ENCODE measurements at regions of chr7 and their contacts with region 1.

Region 1: GRCh38 chr7:76179686-76180085 is 22.0 kb upstream of the SRRM3 start:
- DNase-seq: no peak
- ATAC-seq: no peak
- H3K4me3 ChIP-seq: no peak overlapping the region
- H3K27ac ChIP-seq: no peak overlapping the region
- H3K4me1 ChIP-seq: peaks cover 0 to 7% of the 10 kb centered on the region in 2 donors
- H3K27me3 ChIP-seq: no peaks in the 10 kb centered on the region
- CTCF ChIP-seq: no peak

Region 2: GRCh38 chr7:75993689-75994387 is 185.8 kb before region 1 on chr7:
- intact Hi-C with region 1: no loop called
- DNase-seq: peak in 2 of 4 donors; percentile 59 to 90
- ATAC-seq: peak; percentile 50
- H3K4me3 ChIP-seq: peak overlapping the region; percentile 89 to 99
- H3K27ac ChIP-seq: peak overlapping the region; percentile 85 to 88
- H3K4me1 ChIP-seq: peaks cover 10 to 57% of the 10 kb centered on the region in 2 donors
- H3K27me3 ChIP-seq: no peaks in the 10 kb centered on the region
- CTCF ChIP-seq: no peak

Region 3: DNA sequence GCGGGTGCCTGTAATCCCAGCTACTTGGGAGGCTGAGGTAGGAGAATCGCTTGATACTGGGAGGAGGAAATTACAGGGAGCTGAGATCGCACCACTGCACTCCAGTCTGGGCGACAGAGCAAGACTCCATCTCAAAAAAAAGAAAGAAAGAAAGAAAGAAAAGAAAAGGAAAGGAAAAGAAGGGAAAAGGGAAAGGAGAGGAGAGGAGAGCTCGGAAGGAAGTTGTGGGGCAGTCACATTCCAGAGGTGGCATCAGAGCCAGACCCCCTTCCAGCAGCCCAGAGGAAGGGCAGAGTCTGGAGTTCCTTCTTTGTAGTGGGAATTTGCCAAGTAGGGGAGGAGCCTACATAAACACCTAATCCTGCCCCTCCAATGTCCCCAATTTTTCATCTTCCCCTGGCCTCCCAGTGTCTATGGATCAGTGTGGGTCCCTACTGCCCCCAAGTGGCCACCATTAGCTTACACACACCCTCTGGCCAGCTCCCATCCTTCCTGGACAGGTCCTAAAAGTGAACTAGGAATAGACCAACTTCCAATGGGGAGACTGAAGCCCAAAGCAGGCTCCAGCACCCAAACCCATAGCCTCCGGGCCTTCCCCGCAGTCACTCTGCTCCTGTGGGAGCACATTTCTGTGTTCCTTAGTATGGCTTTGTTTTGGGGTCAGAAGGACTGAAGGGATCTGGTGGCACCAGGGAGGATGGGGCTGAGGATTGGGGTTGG is 83.2 kb after region 1 on chr7:
- intact Hi-C with region 1: loop called in 1 of 2 experiments (anchors 5 kb)
- DNase-seq: peak in 2 of 4 donors; percentile 48 to 55
- ATAC-seq: peak; percentile 89
- H3K4me3 ChIP-seq: no peak overlapping the region
- H3K27ac ChIP-seq: no peak overlapping the region
- H3K4me1 ChIP-seq: peaks cover 7 to 14% of the 10 kb centered on the region in 2 donors
- H3K27me3 ChIP-seq: peaks cover 24 to 72% of the 10 kb centered on the region in 2 donors
- CTCF ChIP-seq: peak; percentile 57 to 68

Region 4: DNA sequence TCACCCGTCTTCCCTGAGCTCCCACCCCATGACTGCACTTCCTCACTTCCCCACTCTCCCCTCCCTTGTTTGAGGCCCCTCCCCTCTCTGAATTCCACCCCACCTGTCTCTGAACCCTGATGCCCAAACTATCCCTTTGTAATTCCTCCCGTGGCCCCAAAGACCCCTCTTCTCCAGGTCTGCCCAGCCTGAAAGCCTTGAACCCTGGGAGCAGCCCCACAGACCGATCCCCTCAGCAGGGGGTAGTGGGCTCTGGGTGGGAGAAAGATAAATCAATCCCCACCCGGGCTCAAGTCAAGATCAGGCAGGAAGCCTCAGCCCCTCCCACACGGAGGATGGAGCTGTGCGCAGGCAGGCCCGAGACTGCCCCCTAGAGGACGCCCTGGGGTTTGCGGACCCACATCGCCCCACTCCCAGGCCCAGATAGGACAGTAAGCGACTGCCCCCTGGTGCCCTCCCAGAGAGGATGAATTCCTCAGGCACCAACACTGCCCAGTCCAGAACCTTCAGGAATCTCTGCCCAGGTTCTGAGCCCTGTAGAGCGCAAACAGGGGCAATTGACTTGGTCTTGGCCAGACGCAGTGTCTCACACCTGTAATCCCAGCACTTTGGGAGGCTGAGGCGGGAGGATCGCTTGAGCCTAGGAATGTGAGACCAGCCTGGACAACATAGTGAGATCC is 134.5 kb after region 1 on chr7:
- intact Hi-C with region 1: loop called in 1 of 2 experiments (anchors 10 kb)
- DNase-seq: peak; percentile 90 to 98 (median 96)
- ATAC-seq: peak; percentile 87
- H3K4me3 ChIP-seq: no peak overlapping the region
- H3K27ac ChIP-seq: peak overlapping the region in 1 of 2 donors; percentile 39
- H3K4me1 ChIP-seq: peaks cover 0 to 14% of the 10 kb centered on the region in 2 donors
- H3K27me3 ChIP-seq: no peaks in the 10 kb centered on the region
- CTCF ChIP-seq: peak; percentile 99 to 100